HepG2 (cell line): ENCODE measurements at regions of chr3 and their contacts with region 1.

Region 1: DNA sequence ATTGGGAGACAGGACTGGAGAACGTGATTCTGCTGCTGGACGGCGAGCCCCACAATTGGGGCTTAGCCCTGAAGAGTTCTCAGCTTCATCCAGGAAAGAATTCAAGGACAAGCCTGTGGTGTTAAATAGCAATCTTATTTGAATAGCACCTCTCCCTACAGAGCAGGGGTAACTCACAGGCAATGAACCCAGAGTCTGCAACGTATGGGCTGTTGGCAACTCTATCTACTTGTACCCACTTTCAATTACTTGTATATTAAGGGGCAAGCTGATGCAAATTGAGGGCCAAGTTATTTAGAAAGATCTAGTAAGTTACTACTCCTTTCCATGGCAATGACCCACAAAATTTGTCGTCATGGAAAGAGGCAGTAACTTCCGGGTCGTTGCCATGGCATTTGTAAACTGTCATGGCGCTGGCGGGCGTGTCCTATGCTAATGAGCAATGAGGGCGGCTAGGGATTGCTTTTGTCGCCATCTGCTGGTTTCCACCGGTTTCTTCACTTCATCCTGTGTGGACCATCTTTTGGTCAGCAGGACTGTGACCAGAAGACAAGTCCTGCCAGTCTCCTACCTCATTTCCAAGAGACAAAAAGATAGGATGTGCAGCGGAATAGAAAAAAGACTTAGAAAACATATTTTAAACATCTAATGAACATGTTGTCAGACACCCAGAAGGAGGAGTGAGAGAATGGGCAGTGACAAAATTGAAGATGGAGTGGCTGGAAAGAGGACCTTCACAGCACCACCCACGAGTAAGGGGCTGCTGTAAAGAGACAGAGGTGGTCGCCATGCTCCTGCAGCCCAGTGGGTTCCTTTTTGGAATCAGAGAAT is 45.8 kb upstream of the SH3BP5 start:
- DNase-seq: peak; percentile 89
- ATAC-seq: peak; percentile 98
- H3K4me3 ChIP-seq: peak overlapping the region; percentile 42 to 59 (median 51); a peak in 5 of 6 replicates
- H3K27ac ChIP-seq: peak overlapping the region; percentile 25
- H3K4me1 ChIP-seq: peaks cover 5% of the 10 kb centered on the region; the same call in 1 of the 2 replicates
- H3K27me3 ChIP-seq: no peaks in the 10 kb centered on the region
- CTCF ChIP-seq: peak; percentile 94
- EP300 ChIP-seq: no peak; a peak in 1 of 4 replicates
- POLR2A ChIP-seq: no peak
- RAD21 ChIP-seq: peak; percentile 78

Region 2: GRCh38 chr3:14780927-14781507 is 597.2 kb before region 1 on chr3:
- CTCF ChIA-PET with region 1: no interaction called
- POLR2A ChIA-PET with region 1: no interaction called
- in situ Hi-C with region 1: no loop called
- intact Hi-C with region 1: no loop called
- DNase-seq: peak; percentile 61
- ATAC-seq: peak; percentile 99
- H3K4me3 ChIP-seq: no peak overlapping the region
- H3K27ac ChIP-seq: no peak overlapping the region
- H3K4me1 ChIP-seq: peaks cover 39% of the 10 kb centered on the region
- H3K27me3 ChIP-seq: no peaks in the 10 kb centered on the region
- CTCF ChIP-seq: peak; percentile 94
- EP300 ChIP-seq: no peak
- POLR2A ChIP-seq: no peak
- RAD21 ChIP-seq: peak; percentile 86

Region 3: DNA sequence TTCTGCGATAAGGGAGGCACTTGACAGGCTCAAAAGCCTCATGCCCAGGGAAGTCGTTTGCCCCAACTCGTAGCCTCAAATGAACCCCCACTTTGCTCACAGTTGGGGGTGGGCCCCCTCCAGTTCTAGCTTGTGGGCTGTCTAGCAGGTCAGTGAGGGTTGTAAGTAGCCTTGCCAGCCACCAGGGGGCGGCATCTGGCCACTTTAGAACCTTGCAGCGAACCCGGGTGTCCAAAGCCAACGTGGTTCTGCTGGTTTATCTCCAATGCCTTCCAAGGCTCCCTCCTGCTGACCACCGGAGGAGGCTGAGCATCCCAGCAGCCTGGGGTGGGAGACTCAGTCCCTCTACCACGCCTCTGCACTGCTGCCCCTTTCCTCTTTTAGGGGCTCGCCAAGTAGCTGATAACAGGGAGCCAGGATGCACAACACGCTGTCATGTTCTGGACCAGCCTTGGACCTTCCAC is 270.1 kb before region 1 on chr3:
- CTCF ChIA-PET with region 1: interaction called, 6 read pairs
- POLR2A ChIA-PET with region 1: no interaction called
- in situ Hi-C with region 1: loop called (anchors 10 kb)
- intact Hi-C with region 1: loop called (anchors 1 kb)
- DNase-seq: peak; percentile 64
- ATAC-seq: peak; percentile 94
- H3K4me3 ChIP-seq: peak overlapping the region; percentile 35 to 62 (median 52); a peak in 5 of 6 replicates
- H3K27ac ChIP-seq: peak overlapping the region; percentile 66
- H3K4me1 ChIP-seq: peaks cover 39% of the 10 kb centered on the region
- H3K27me3 ChIP-seq: peaks cover 0 to 2% of the 10 kb centered on the region in 2 experiments; a peak in 1 of 5 replicates
- CTCF ChIP-seq: peak; percentile 95
- EP300 ChIP-seq: no peak
- POLR2A ChIP-seq: no peak
- RAD21 ChIP-seq: peak; percentile 91

Region 4: DNA sequence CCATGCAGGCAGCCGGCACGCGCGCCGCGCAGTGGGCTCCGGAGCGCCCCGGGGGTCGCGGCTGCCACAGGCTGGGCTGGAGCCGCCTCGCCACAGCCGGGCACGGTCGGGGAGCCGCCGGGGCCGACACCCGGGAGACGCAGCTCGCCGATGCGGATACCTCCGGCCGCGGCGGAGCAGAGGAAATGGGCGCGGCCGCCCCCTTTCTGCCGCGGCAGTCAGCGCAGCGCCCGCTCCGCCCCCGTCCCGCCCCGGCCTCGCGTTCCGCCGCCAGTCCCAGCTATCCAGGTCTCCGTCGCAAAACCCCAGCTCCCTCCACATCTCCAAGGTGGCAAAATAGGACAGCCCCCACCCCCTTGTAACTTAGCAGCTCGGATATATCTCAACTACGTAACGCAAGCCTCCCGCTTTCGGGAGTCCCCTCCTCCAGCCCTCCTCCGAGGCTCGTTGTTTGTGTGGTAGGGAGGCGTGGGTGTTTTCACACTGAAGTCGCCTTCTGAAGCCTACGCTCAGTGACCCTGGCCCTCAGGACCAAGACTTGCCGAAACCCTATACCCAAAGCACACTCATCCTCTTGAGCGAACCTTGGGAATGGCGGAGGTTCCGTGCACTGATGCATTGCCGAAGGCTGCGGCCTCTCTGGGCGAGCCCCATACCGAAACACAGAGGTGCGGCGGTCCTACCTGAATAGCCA is 45.6 kb before region 1 on chr3 and contains the start of gene SH3BP5:
- CTCF ChIA-PET with region 1: no interaction called
- POLR2A ChIA-PET with region 1: no interaction called
- in situ Hi-C with region 1: no loop called
- intact Hi-C with region 1: loop called (anchors 5 kb)
- DNase-seq: no peak
- ATAC-seq: peak; percentile 98
- H3K4me3 ChIP-seq: peak within 1 kb of the TSS; percentile 56 to 81 (median 61)
- H3K27ac ChIP-seq: no peak within 1 kb of the TSS
- H3K4me1 ChIP-seq: peaks cover 10% of the 10 kb centered on the region
- H3K27me3 ChIP-seq: peaks cover 8 to 35% of the 10 kb centered on the region in 2 experiments; a peak in 4 of 5 replicates
- CTCF ChIP-seq: peak; percentile 62
- EP300 ChIP-seq: no peak
- POLR2A ChIP-seq: no peak
- RAD21 ChIP-seq: peak; percentile 73
- total RNA-seq, gene SH3BP5: 0.09 TPM in 1 of 2 replicates, not detected in the other